PC-3 (cell line): ENCODE measurements at regions of chr11 and their contacts with region 1.

Region 1: GRCh38 chr11:106495046-106495445 is 417.6 kb downstream of the AASDHPPT start:
- DNase-seq: peak; percentile 93
- ATAC-seq: peak; percentile 95
- H3K4me3 ChIP-seq: no peak overlapping the region
- H3K27ac ChIP-seq: peak overlapping the region; percentile 68
- H3K4me1 ChIP-seq: peaks cover 39% of the 10 kb centered on the region
- H3K27me3 ChIP-seq: no peaks in the 10 kb centered on the region
- CTCF ChIP-seq: no peak

Region 2: GRCh38 chr11:106156290-106156937 is 338.6 kb before region 1 on chr11:
- CTCF ChIA-PET with region 1: no interaction called
- POLR2A ChIA-PET with region 1: no interaction called
- intact Hi-C with region 1: loop called (anchors 1 kb)
- DNase-seq: peak; percentile 76
- ATAC-seq: peak; percentile 59
- H3K4me3 ChIP-seq: no peak overlapping the region
- H3K27ac ChIP-seq: no peak overlapping the region
- H3K4me1 ChIP-seq: no peaks in the 10 kb centered on the region
- H3K27me3 ChIP-seq: no peaks in the 10 kb centered on the region
- CTCF ChIP-seq: peak; percentile 85

Region 3: GRCh38 chr11:106381901-106382300 is 113.1 kb before region 1 on chr11:
- CTCF ChIA-PET with region 1: no interaction called
- POLR2A ChIA-PET with region 1: no interaction called
- intact Hi-C with region 1: no loop called
- DNase-seq: peak; percentile 75
- ATAC-seq: peak; percentile 29
- H3K4me3 ChIP-seq: no peak overlapping the region
- H3K27ac ChIP-seq: no peak overlapping the region
- H3K4me1 ChIP-seq: peaks cover 11% of the 10 kb centered on the region; the same call in 1 of the 2 replicates
- H3K27me3 ChIP-seq: no peaks in the 10 kb centered on the region
- CTCF ChIP-seq: no peak

Region 4: GRCh38 chr11:106457727-106458126 is 37.3 kb before region 1 on chr11:
- CTCF ChIA-PET with region 1: interaction called, 5 read pairs
- POLR2A ChIA-PET with region 1: no interaction called
- intact Hi-C with region 1: loop called (anchors 1 kb)
- DNase-seq: peak; percentile 96
- ATAC-seq: peak; percentile 90
- H3K4me3 ChIP-seq: 0 out of 2 replicates have a peak overlapping the region, but pooled peaks have one; percentile 9
- H3K27ac ChIP-seq: peak overlapping the region; percentile 90
- H3K4me1 ChIP-seq: peaks cover 42% of the 10 kb centered on the region
- H3K27me3 ChIP-seq: no peaks in the 10 kb centered on the region
- CTCF ChIP-seq: no peak

Region 5: GRCh38 chr11:106468086-106468485 is 27.0 kb before region 1 on chr11:
- CTCF ChIA-PET with region 1: no interaction called
- POLR2A ChIA-PET with region 1: no interaction called
- intact Hi-C with region 1: no loop called
- DNase-seq: peak; percentile 50
- ATAC-seq: no peak
- H3K4me3 ChIP-seq: no peak overlapping the region
- H3K27ac ChIP-seq: no peak overlapping the region
- H3K4me1 ChIP-seq: peaks cover 74% of the 10 kb centered on the region
- H3K27me3 ChIP-seq: no peaks in the 10 kb centered on the region
- CTCF ChIP-seq: no peak

Region 6: DNA sequence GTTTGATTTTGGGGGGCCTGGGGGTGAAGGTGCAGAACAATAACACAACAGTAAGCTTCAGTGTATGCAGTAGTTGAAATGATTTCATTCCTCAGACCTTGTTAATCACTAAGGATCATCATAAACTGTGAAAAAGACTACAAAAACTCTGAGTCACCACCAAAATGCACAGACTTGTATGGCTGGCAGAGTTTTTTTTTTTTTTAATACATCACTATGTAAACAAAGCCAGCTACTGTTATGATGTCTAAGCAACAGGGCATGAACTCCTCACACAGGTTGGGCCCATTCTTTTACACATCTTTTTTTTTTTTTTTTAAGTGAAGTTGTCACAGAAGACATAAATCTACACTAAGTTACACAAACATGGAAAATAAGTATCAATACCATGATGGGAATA is 211.3 kb after region 1 on chr11:
- CTCF ChIA-PET with region 1: no interaction called
- POLR2A ChIA-PET with region 1: no interaction called
- intact Hi-C with region 1: loop called (anchors 10 kb)
- DNase-seq: peak; percentile 95
- ATAC-seq: peak; percentile 99
- H3K4me3 ChIP-seq: no peak overlapping the region
- H3K27ac ChIP-seq: peak overlapping the region; percentile 60
- H3K4me1 ChIP-seq: peaks cover 21% of the 10 kb centered on the region
- H3K27me3 ChIP-seq: no peaks in the 10 kb centered on the region
- CTCF ChIP-seq: no peak

Region 7: GRCh38 chr11:107043242-107044006 is 548.4 kb after region 1 on chr11:
- CTCF ChIA-PET with region 1: no interaction called
- POLR2A ChIA-PET with region 1: no interaction called
- intact Hi-C with region 1: loop called (anchors 10 kb)
- DNase-seq: peak; percentile 81
- ATAC-seq: peak; percentile 73
- H3K4me3 ChIP-seq: no peak overlapping the region
- H3K27ac ChIP-seq: peak overlapping the region; percentile 20
- H3K4me1 ChIP-seq: peaks cover 19% of the 10 kb centered on the region
- H3K27me3 ChIP-seq: no peaks in the 10 kb centered on the region
- CTCF ChIP-seq: no peak